ENCODE measurements at regions of chr7 and their contacts with region 1.

Region 1: GRCh38 chr7:151626422-151627115 is 106.9 kb upstream of the RHEB start:
- DNase-seq: peak in 1 of 2 donors; percentile 34
- ATAC-seq: peak; percentile 49 to 76 (median 64)
- H3K4me3 ChIP-seq: no peak overlapping the region
- H3K27ac ChIP-seq: peak overlapping the region in 2 of 10 donors; percentile 3 to 25
- H3K4me1 ChIP-seq: peaks cover 0 to 66% (median 33%) of the 10 kb centered on the region in 9 donors
- H3K27me3 ChIP-seq: no peaks in the 10 kb centered on the region
- CTCF ChIP-seq: peak in 8 of 9 donors; percentile 30 to 63 (median 50)

Region 2: GRCh38 chr7:151459726-151460473 is 166.7 kb before region 1 on chr7:
- intact Hi-C with region 1: loop called in 1 of 10 experiments (anchors 10 kb)
- DNase-seq: peak; percentile 71 to 79
- ATAC-seq: peak; percentile 81 to 93 (median 89)
- H3K4me3 ChIP-seq: peak overlapping the region in 8 of 10 donors; percentile 6 to 33 (median 24)
- H3K27ac ChIP-seq: peak overlapping the region; percentile 85 to 93 (median 90)
- H3K4me1 ChIP-seq: peaks cover 16 to 33% (median 24%) of the 10 kb centered on the region in 9 donors
- H3K27me3 ChIP-seq: no peaks in the 10 kb centered on the region
- CTCF ChIP-seq: peak in 6 of 9 donors; percentile 21 to 54 (median 40)

Region 3: DNA sequence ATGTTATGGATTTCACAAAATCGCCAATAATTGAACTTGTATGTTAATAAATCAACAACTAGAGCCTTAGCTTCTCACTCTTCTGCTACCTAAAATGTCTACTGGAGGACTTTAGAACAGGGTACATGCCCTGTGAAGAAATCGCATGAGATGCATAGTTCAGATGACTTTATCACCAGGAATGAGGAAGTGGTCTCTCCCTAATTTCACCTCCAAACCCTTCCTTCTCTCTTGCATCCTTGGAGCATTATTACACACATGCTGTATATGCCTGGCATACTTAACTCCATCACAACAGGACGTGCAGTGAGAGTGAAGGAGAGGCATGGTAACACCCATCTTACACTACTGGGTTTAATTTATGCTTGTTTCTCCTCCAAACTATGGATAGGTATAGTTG is 134.7 kb before region 1 on chr7:
- intact Hi-C with region 1: no loop called
- DNase-seq: no peak
- ATAC-seq: peak in 1 of 8 donors; percentile 34
- H3K4me3 ChIP-seq: no peak overlapping the region
- H3K27ac ChIP-seq: no peak overlapping the region
- H3K4me1 ChIP-seq: peaks cover 7 to 86% (median 61%) of the 10 kb centered on the region in 9 donors
- H3K27me3 ChIP-seq: no peaks in the 10 kb centered on the region
- CTCF ChIP-seq: no peak

Region 4: DNA sequence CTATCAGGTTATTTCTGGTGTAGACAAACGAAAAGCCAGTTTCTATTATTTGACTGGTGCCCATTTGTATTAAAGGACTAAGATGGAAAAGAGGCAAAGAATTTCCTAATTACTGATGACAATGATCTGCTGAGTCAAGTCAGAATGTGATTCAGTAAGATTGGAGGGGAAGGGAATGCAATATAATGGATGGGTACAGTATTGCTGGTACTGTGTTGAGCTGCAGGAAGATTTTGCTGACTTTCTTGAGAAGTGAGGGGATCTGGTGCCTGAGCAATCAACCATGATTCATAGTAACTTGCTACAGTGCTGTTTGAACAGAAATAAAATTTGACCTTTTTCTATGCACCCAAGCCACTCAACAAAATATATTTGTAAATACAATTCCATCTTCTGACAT is 32.2 kb after region 1 on chr7:
- intact Hi-C with region 1: no loop called
- DNase-seq: no peak
- ATAC-seq: no peak
- H3K4me3 ChIP-seq: no peak overlapping the region
- H3K27ac ChIP-seq: peak overlapping the region in 1 of 10 donors; percentile 9
- H3K4me1 ChIP-seq: peaks cover 0 to 8% (median 0%) of the 10 kb centered on the region in 9 donors
- H3K27me3 ChIP-seq: no peaks in the 10 kb centered on the region
- CTCF ChIP-seq: no peak

Region 5: DNA sequence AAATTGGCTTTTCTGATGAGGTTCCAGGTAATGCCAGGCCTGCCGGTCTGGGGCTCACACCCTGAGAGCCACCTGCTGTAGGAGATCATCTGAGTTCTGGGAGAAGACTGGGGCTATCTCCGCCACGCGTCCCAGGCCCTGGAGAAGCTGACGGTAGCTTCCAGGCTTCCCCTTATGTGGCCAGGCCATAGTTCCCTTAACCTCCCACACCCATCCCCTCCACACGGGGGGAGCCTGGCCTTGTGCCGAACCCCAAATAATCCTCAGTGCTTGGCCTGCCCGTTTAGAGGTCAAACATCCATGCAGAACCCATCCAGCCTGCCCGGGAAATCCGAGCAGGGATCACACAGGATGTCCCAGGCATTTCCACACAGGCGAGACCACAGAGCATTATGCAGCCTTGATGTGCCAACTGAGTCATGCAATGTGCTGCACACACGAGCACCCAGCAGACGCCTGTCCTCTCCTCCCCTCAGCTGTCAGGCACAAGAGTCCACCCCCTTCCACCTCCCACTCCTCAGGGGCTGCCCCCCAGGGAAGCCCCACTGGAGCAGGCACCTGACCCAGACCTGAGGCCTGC is 74.1 kb after region 1 on chr7:
- intact Hi-C with region 1: loop called in 7 of 10 experiments (anchors 5 to 10 kb)
- DNase-seq: no peak
- ATAC-seq: peak in 1 of 8 donors; percentile 1
- H3K4me3 ChIP-seq: no peak overlapping the region
- H3K27ac ChIP-seq: peak overlapping the region in 6 of 10 donors; percentile 31 to 76 (median 62)
- H3K4me1 ChIP-seq: peaks cover 3 to 67% (median 30%) of the 10 kb centered on the region in 9 donors
- H3K27me3 ChIP-seq: no peaks in the 10 kb centered on the region
- CTCF ChIP-seq: no peak

Region 6: DNA sequence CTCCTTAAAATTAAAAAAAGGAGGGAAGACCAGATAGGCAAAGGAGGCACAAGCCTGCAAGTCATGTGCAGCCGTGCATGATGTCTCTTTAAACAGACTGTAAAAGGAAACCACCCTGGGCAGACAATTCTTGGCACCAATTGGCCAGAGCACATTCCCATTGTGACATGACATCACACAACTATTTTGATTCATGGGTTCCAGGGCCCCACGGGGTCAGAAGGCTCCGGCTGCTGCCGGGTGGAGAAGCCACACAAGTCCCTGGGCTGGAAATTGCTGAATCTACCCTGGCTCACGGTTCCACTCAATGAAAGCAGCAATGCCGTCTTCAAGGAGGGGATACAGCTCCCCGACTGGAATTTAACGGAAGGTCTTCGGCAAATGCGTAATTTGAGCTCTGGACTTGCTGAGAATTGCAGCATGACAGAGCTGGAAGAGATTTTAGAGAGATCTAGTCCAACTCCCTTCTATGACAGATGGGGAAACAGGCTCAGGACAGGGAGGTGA is 109.9 kb after region 1 on chr7:
- intact Hi-C with region 1: loop called in 2 of 10 experiments (anchors 5 to 10 kb)
- DNase-seq: peak; percentile 58 to 84
- ATAC-seq: peak; percentile 83 to 95 (median 92)
- H3K4me3 ChIP-seq: peak overlapping the region in 9 of 10 donors; percentile 46 to 64 (median 56)
- H3K27ac ChIP-seq: peak overlapping the region; percentile 59 to 98 (median 90)
- H3K4me1 ChIP-seq: peaks cover 5 to 48% (median 16%) of the 10 kb centered on the region in 9 donors
- H3K27me3 ChIP-seq: no peaks in the 10 kb centered on the region
- CTCF ChIP-seq: peak in 3 of 9 donors; percentile 22 to 34 (median 31)

Region 7: DNA sequence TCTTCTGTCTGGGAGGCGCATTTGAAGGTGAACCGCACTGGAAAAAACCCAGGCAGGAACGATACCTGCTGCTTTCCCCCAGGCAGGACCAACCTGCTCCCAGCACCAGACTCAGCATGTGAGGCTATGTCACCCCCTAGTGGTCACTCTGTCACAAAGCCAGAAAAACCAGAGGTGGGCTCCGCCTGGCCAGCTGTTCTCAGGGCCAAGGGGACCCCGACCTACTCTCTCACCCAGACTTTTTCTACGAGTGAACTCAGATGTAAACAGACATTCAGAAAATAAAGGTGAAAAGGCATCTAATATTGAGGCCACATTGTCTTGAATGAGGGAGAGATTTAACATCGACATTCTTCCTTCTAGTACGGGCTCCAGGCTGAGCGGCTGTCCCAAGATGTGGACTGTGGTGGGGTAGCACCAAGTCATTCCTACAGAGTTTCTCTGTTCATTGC is 133.0 kb after region 1 on chr7:
- intact Hi-C with region 1: loop called in 9 of 10 experiments (anchors 2 to 10 kb)
- DNase-seq: peak in 1 of 2 donors; percentile 60
- ATAC-seq: peak; percentile 27 to 65 (median 51)
- H3K4me3 ChIP-seq: no peak overlapping the region
- H3K27ac ChIP-seq: no peak overlapping the region
- H3K4me1 ChIP-seq: peaks cover 9 to 37% (median 22%) of the 10 kb centered on the region in 9 donors
- H3K27me3 ChIP-seq: no peaks in the 10 kb centered on the region
- CTCF ChIP-seq: peak; percentile 76 to 95 (median 88)

Measured in heart right ventricle (tissue), 16 donors.